ENCODE measurements at regions of chr3 and their contacts with region 1.

Region 1: DNA sequence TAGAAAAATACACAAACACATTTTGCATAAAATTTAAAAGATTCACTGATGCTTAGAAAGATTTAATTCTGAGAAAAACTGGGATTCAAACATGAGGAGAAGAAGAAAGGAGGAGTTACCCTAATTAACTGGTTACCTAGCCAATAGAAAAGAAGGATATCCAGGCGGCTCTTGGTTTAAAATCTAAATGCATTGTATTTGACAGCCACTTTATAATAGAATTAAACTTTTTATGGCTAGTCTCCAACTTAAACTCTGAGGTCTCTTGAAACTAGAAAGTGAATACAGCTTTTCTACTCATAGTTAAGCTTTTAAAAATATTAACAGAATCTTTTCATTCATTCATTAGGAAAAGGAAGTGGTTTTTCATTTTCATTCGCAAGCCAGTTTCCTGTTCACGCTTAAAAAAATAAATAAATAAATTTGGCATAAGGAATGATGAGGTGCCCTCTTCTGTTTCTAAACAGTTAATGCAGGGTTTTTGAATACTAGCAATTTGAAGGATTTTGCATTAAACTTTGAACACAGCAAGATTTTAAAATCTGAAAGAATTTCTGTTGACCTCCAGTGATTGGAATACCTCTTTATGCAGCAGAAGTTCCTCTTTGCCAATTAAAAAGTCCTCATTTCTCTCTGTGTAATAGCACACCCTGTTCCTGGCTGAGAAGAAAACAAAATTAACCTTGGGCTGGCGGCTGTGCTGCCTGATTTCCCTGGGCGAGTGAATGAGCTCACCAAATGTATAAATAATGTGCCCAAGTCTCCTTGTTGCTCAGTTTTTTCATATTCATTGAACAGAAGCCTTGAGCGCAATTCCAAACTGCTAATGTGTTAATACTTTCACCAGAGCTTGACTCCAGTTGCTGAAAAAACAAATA is 105.1 kb downstream of the ZMAT3 start:
- DNase-seq: no peak
- ATAC-seq: no peak
- H3K4me3 Mint-ChIP-seq: no peak overlapping the region
- H3K27ac Mint-ChIP-seq: no peak overlapping the region
- H3K4me1 Mint-ChIP-seq: peaks cover 13% of the 10 kb centered on the region
- H3K27me3 Mint-ChIP-seq: no peaks in the 10 kb centered on the region

Region 2: DNA sequence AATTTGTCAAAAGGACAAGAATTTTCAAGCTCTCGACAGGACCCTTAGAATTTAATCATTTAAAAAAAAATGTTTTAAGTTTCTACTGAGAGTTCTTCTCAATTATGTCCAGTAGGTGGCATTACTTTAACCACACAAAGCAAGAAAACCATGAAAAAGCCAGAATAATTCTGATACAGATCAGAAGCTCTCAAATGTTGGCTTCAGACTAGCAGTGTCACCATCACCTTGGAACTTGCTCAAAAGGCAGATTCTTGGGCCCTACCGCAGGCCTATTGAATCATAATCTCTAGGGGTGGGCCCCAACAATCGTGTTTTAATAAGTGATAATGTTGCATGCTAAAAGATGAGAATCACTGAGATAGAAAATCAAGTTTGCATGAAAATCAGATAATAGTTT is 529.8 kb before region 1 on chr3:
- CTCF ChIA-PET with region 1: interaction called, 3 read pairs
- POLR2A ChIA-PET with region 1: no interaction called
- intact Hi-C with region 1: loop called (anchors 1 to 2 kb)
- DNase-seq: no peak
- ATAC-seq: no peak
- H3K4me3 Mint-ChIP-seq: no peak overlapping the region
- H3K27ac Mint-ChIP-seq: no peak overlapping the region
- H3K4me1 Mint-ChIP-seq: no peaks in the 10 kb centered on the region
- H3K27me3 Mint-ChIP-seq: no peaks in the 10 kb centered on the region

Region 3: DNA sequence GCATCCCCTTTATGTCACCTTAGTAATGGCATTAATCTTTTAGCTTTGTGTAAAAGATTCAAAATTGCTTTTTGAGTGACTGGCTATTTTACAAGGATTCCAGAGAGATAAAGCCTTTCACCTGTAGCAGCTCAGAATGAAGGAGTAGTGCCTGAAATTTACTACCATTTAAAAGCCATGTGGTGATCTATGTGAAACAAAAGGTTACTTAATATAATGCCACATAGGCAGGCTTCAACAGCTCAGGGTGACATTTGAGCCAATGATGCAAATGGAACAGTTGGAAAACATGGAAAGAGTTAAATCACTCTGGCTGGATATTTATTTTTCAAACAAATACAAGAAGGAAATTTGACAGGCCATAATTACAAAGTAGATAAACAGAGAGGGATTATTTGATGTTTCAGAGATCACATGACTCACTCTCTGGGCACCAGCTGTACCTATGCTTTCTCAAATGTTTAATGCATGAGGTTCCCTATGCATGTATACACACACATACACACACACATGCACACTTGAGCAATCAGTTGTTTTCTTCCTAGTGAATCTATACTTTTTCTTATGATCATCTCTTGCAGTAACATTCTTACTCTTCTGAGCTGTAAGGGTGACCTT is 66.4 kb before region 1 on chr3:
- CTCF ChIA-PET with region 1: no interaction called
- POLR2A ChIA-PET with region 1: no interaction called
- intact Hi-C with region 1: no loop called
- DNase-seq: no peak
- ATAC-seq: no peak
- H3K4me3 Mint-ChIP-seq: no peak overlapping the region
- H3K27ac Mint-ChIP-seq: no peak overlapping the region
- H3K4me1 Mint-ChIP-seq: no peaks in the 10 kb centered on the region
- H3K27me3 Mint-ChIP-seq: no peaks in the 10 kb centered on the region

Measured in activated CD4-positive, alpha-beta T cell treated with anti-CD3 and anti-CD28 coated beads for 36 hours (primary cell).